ENCODE measurements at regions of chr3 and their contacts with region 1.

Region 1: DNA sequence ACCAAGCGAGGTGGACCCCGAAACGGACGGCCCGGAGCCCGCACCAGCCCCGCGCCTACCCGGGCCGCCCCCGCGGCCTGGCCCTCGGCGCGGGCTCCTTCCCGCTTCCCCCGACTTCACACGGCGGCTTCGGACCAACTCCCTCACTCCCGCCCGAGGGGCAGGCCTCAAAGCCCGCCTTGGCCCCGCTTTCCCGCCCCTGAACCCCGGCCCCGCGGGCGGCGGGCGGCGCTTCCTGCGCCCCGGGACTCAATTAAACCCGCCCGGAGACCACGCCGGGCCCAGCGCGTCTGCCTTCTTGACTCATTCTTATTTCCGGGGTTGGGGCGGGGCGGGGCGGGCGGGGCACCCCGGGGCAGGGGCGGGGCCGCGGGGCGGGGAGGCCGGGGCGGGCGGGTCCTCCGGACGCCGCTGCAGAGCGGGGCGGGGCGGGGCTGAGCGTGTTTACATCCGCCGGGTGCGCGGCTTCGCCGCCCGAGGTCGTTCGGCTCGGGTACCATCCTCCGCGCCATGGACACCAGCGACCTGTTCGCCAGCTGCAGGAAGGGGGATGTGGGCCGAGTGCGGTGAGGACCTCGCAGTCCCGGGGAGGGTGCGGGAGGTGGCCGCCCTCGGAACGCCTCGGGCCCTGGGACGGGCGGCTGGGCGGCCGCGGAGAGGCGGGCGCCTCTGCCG is at the start of gene ABTB1:
- DNase-seq: peak in 1 of 2 donors; percentile 89
- H3K4me3 ChIP-seq: peak within 1 kb of the TSS; percentile 89 to 90
- H3K27ac ChIP-seq: peak within 1 kb of the TSS; percentile 96
- H3K4me1 ChIP-seq: peaks cover 13 to 16% of the 10 kb centered on the region in 2 donors
- H3K27me3 ChIP-seq: no peaks in the 10 kb centered on the region
- CTCF ChIP-seq: no peak
- total RNA-seq, gene ABTB1: 61.7 TPM

Region 2: DNA sequence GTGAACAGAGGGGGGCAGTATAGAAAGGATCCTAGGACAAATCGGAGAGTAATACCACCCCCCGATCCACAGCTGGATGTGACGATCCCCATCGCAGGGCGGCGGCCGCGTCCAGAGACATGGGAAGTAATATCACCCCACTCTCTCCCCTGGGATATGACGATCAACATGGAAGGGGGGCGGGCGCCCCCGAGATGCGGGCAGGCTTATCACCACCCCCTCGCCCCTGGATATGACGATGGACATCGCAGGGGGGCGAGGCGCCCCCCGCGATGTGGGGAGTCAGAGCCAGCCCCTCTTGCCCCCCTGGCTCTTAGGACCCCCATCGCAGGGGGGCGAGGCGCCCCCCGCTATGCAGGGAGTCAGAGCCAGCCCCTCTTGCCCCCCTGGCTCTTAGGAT is 1957.0 kb before region 1 on chr3:
- intact Hi-C with region 1: no loop called
- DNase-seq: no peak
- H3K4me3 ChIP-seq: no peak overlapping the region
- H3K27ac ChIP-seq: no peak overlapping the region
- H3K4me1 ChIP-seq: no peaks in the 10 kb centered on the region
- H3K27me3 ChIP-seq: no peaks in the 10 kb centered on the region
- CTCF ChIP-seq: no peak

Region 3: DNA sequence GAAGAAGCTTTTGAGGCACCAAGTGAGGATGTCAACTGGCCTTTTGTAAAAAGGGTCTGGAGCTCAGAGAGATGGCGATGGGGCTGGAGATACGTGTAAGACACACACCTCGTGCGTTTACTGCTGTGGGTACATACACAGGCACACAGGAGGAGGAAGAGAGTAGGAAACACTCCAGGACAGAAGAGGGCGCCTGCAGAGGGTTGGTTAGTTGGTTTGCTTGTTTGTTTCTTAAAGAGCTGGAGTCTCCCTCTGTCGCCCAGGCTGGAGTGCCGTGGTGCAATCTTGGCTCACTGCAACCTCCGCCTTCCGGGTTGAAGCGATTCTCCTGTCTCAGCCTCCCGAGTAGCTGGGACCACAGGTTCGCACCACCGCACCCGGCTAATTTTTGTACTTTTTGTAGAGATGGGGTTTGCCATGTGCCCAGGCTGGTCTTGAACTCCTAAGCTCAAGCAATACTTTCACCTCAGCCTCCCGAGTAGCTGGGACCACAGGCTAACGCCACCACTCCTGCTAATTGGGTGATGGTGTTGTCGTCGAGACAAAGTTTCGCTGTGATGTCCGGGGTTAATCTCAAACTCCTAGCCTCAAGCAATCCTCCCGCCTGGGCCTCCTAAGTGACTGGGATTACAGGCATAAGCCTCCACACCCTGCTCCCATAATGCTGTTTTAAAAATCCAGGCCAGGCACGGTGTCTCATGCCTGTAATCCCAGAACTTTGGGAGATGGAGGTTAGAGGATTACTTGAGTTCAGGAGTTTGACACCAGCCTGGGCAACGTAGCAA is 383.5 kb before region 1 on chr3:
- intact Hi-C with region 1: no loop called
- DNase-seq: no peak
- H3K4me3 ChIP-seq: no peak overlapping the region
- H3K27ac ChIP-seq: no peak overlapping the region
- H3K4me1 ChIP-seq: no peaks in the 10 kb centered on the region
- H3K27me3 ChIP-seq: no peaks in the 10 kb centered on the region
- CTCF ChIP-seq: no peak

Region 4: DNA sequence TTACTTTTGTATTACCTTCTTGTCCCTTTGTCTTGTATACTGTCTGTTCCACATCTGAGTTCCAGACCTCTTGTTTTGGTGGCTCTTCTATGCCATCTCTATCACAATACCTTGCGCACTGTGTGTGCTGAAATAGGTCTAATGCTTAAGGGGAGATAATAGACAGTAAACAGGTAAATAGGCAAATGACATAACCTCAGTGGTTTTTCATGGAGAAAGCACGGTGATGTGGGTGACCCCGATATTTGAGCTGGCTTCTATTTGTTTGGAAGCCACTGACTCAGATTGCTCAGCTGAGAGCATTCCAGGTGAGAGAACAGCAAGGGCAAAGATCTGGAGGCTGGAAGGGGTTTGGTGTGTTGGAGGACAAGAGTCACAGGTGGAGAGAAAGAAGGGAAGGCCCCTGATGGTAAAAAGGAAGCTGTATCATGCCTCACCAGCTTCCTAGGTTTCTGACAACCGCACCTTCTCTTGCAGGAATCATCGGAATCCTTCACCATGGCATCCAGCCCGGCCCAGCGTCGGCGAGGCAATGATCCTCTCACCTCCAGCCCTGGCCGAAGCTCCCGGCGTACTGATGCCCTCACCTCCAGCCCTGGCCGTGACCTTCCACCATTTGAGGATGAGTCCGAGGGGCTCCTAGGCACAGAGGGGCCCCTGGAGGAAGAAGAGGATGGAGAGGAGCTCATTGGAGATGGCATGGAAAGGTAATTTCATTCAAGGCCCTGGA is 73.6 kb before region 1 on chr3:
- intact Hi-C with region 1: loop called (anchors 5 kb)
- DNase-seq: no peak
- H3K4me3 ChIP-seq: peak overlapping the region; percentile 64 to 69
- H3K27ac ChIP-seq: peak overlapping the region; percentile 63 to 70
- H3K4me1 ChIP-seq: peaks cover 0 to 8% of the 10 kb centered on the region in 2 donors
- H3K27me3 ChIP-seq: no peaks in the 10 kb centered on the region
- CTCF ChIP-seq: no peak

Region 5: GRCh38 chr3:127690823-127691452 is 18.3 kb after region 1 on chr3:
- intact Hi-C with region 1: loop called (anchors 2 kb)
- DNase-seq: no peak
- H3K4me3 ChIP-seq: no peak overlapping the region
- H3K27ac ChIP-seq: peak overlapping the region; percentile 85 to 89
- H3K4me1 ChIP-seq: peaks cover 29 to 32% of the 10 kb centered on the region in 2 donors
- H3K27me3 ChIP-seq: no peaks in the 10 kb centered on the region
- CTCF ChIP-seq: peak; percentile 60 to 73 (median 71)

Region 6: DNA sequence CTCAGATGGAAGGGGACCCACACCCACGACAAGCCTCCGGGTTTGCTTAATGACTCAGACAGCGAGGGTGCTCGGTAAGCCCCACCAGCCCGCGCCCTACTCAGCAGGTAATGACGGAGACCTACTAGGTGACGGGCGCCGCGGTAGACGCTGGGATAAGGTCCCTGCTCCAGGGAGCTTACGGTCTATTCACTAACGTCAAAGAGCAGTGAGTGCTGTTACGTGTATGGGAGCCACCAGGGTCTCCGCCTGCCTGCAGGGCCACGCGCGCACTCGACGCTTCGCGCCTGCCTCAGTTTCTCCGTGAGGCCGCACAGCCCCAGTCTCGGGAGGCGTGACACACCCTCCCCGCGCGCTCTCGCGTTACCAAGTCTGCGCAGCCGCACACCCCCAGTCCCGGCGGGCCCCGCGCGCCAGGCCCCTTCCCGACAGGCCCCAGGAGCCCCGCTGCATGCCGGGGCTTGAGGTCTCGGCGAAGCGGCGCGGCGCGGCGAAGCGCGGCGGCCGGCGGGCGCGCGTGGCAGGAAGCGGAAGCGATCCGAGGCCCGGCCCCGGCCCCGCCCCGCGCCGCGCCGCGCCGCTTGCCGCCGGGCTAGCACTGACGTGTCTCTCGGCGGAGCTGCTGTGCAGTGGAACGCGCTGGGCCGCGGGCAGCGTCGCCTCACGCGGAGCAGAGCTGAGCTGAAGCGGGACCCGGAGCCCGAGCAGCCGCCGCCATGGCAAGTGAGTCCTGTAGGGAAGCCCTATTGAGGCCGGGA is 379.4 kb after region 1 on chr3 and contains the start of gene SEC61A1:
- intact Hi-C with region 1: loop called (anchors 5 kb)
- DNase-seq: peak; percentile 81 to 96
- H3K4me3 ChIP-seq: peak within 1 kb of the TSS; percentile 94 to 98
- H3K27ac ChIP-seq: peak within 1 kb of the TSS; percentile 96
- H3K4me1 ChIP-seq: peaks cover 15 to 29% of the 10 kb centered on the region in 2 donors
- H3K27me3 ChIP-seq: no peaks in the 10 kb centered on the region
- CTCF ChIP-seq: peak in 1 of 3 experiments; percentile 4
- total RNA-seq, gene SEC61A1: 193 TPM